ENCODE measurements at regions of chr2 and their contacts with region 1.

Region 1: GRCh38 chr2:102442967-102443828 is 20.2 kb downstream of the IL18RAP start:
- DNase-seq: no peak
- ATAC-seq: peak in 3 of 8 donors; percentile 22 to 72 (median 52)
- H3K4me3 ChIP-seq: no peak overlapping the region
- H3K27ac ChIP-seq: no peak overlapping the region
- H3K4me1 ChIP-seq: peaks cover 0 to 16% (median 0%) of the 10 kb centered on the region in 9 donors
- H3K27me3 ChIP-seq: peaks cover 0 to 3% (median 0%) of the 10 kb centered on the region in 7 donors
- CTCF ChIP-seq: peak; percentile 39 to 80 (median 68)

Region 2: DNA sequence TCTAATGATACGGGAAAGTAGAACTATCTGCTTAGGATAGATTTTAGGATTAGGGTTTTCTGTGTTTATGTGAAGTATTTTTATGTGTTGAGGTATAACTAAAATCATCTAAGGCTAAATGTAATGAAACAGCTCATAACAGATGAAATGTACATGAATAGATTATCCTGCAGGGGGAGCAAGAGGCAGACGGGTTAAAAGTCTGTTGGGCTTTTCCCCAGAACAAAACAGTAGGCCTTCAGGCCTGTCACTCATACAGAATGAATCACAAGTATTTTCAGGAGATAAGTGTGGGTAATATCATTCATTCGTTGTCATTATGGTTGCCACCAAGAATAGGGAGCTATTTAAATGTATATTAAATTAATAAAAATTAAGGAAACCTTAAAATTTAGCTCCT is 559.3 kb before region 1 on chr2:
- intact Hi-C with region 1: loop called in 4 of 10 experiments (anchors 10 kb)
- DNase-seq: no peak
- ATAC-seq: peak; percentile 29 to 82 (median 62)
- H3K4me3 ChIP-seq: no peak overlapping the region
- H3K27ac ChIP-seq: peak overlapping the region in 1 of 10 donors; percentile 27
- H3K4me1 ChIP-seq: peaks cover 0 to 42% (median 30%) of the 10 kb centered on the region in 9 donors
- H3K27me3 ChIP-seq: no peaks in the 10 kb centered on the region
- CTCF ChIP-seq: peak; percentile 24 to 68 (median 57)

Region 3: DNA sequence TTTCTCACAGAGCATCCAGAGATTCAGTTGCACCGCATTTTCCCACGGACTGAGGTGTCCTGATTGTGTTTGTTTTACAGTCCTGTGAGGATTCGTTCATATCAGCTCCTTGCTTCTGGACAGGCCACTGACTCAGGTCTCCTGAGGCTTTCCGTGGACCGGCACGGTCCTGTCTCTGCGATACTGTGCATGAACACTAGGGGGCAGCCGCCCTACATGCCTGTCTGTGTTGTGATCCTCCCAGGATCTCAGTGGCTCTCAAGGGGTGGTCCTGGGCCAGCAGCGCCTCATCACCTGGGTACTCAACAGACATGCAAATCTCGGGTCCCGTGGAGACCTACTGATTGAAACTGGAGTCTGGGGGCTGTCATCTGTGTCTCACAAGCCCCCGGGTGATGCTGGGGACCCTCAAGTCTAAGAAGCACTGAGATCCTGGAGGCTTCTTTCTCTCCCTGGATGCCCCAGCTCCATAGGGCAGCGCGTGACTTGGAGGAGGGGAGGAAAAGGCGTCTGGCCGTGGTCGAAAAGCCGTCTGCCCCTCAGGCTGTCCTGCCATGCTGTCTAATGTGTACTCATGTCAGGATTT is 422.5 kb before region 1 on chr2:
- intact Hi-C with region 1: loop called in 3 of 10 experiments (anchors 5 to 10 kb)
- DNase-seq: peak; percentile 89 to 92
- ATAC-seq: peak; percentile 91 to 97 (median 95)
- H3K4me3 ChIP-seq: no peak overlapping the region
- H3K27ac ChIP-seq: peak overlapping the region in 4 of 10 donors; percentile 53 to 79 (median 62)
- H3K4me1 ChIP-seq: peaks cover 0 to 42% (median 20%) of the 10 kb centered on the region in 9 donors
- H3K27me3 ChIP-seq: no peaks in the 10 kb centered on the region
- CTCF ChIP-seq: peak; percentile 98 to 100 (median 99)

Region 4: GRCh38 chr2:102238039-102238756 is 205.0 kb before region 1 on chr2:
- intact Hi-C with region 1: no loop called
- DNase-seq: no peak
- ATAC-seq: peak in 7 of 8 donors; percentile 16 to 61 (median 23)
- H3K4me3 ChIP-seq: no peak overlapping the region
- H3K27ac ChIP-seq: peak overlapping the region in 8 of 10 donors; percentile 13 to 87 (median 59)
- H3K4me1 ChIP-seq: peaks cover 0 to 34% (median 20%) of the 10 kb centered on the region in 9 donors
- H3K27me3 ChIP-seq: peaks cover 0 to 6% (median 0%) of the 10 kb centered on the region in 7 donors
- CTCF ChIP-seq: no peak

Region 5: DNA sequence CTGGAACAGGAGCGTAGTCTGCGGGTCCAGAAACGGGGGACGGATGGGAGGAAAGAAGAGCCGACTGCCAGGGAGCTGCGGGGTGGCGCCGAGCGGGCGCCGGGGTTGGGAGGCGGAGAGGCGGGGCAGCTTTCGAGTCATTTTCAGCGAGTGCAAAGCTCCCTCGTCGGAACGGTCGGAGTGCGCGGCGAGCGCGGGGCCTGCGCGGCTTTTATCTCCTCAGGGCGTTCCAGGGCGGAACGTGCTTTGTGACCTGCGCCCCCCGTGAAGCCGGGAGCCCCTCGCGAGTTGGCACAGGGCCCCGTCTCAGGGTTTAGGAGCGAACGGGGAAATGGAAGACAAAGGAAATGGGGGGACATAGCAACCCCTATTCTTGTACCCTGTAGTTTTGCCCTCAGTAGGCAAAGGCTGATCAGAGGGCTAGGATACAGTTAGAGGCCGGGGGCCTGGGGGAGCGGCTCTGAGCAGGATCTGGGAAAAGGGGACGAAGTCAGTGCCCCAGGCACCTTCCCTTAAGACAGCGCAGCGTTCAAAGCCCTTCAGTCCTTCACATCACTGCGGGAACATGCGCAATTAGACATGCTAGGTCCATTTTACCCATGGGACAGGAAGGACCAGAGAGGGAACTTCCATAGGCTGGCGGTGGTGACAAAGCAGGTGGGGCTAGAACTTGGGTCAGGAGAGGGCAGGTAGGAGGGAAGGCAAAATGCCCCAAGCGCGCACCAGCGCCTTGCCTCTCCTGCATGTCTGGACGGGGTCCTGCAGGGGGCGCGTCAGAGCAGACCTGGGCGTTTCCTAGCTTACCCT is 192.0 kb before region 1 on chr2:
- intact Hi-C with region 1: loop called in 8 of 10 experiments (anchors 5 to 10 kb)
- DNase-seq: peak in 1 of 2 donors; percentile 72
- ATAC-seq: peak; percentile 73 to 86 (median 81)
- H3K4me3 ChIP-seq: peak overlapping the region; percentile 12 to 62 (median 48)
- H3K27ac ChIP-seq: peak overlapping the region in 5 of 10 donors; percentile 7 to 64 (median 42)
- H3K4me1 ChIP-seq: peaks cover 3 to 30% (median 9%) of the 10 kb centered on the region in 9 donors
- H3K27me3 ChIP-seq: peaks cover 0 to 40% (median 13%) of the 10 kb centered on the region in 7 donors
- CTCF ChIP-seq: peak; percentile 21 to 78 (median 69)

Region 6: DNA sequence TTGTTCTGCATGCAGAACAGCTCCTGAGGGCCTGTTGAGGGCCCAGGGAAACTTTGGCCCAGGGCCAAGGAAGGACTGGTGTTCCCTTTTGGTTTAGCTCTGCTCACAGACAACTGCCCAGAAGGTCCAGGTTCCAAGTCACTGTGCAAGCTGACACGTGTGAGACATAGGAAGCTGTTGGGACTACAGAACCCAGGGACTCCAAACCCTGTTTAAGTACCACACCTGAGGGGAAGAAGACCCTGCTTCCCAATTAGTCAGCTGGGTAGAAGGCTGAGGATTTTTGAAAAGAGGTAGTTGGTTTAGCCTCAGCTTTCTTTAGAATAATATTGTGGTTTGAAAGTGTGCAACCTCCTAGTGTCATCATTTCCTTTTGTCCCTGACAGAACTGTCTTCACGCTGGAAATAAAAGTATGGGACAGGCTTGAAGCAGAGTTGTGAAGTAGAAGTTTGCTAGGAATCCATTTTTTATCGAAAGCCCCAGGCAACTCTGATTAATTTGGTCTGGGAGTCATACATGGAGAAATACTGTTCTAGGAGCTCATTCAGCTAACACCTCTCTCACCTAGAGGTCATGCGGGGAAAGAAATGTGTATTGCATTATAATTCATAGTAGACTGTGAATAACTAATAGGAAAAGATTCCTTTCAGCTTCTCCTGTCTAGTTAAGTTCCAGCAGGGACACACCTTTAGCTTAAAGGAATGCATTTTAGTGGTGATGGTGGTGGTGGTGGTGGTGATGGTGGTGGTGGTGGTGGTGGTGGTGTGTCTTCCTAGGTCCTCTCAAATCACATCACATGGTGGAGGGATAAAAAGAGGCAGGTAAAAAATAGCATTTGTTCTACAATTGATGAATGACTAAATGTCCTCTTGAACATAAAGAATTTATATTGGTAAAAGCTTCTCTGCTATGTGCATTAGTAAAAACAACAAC is 151.6 kb before region 1 on chr2:
- intact Hi-C with region 1: no loop called
- DNase-seq: peak in 1 of 2 donors; percentile 25
- ATAC-seq: peak in 1 of 8 donors; percentile 33
- H3K4me3 ChIP-seq: no peak overlapping the region
- H3K27ac ChIP-seq: peak overlapping the region in 1 of 10 donors; percentile 22
- H3K4me1 ChIP-seq: peaks cover 0 to 28% (median 0%) of the 10 kb centered on the region in 9 donors
- H3K27me3 ChIP-seq: peaks cover 0 to 56% (median 3%) of the 10 kb centered on the region in 7 donors
- CTCF ChIP-seq: no peak

Region 7: GRCh38 chr2:102366406-102367112 is 76.6 kb before region 1 on chr2:
- intact Hi-C with region 1: loop called in 1 of 10 experiments (anchors 10 kb)
- DNase-seq: no peak
- ATAC-seq: no peak
- H3K4me3 ChIP-seq: no peak overlapping the region
- H3K27ac ChIP-seq: peak overlapping the region in 1 of 10 donors; percentile 48
- H3K4me1 ChIP-seq: peaks cover 0 to 5% (median 0%) of the 10 kb centered on the region in 9 donors
- H3K27me3 ChIP-seq: no peaks in the 10 kb centered on the region
- CTCF ChIP-seq: no peak